ENCODE measurements at regions of chr16 and their contacts with region 1.

Region 1: GRCh38 chr16:30407102-30407803 is at the start of gene ZNF771:
- DNase-seq: peak; percentile 96
- H3K4me3 ChIP-seq: peak within 1 kb of the TSS; percentile 69 to 99
- H3K27ac ChIP-seq: peak within 1 kb of the TSS; percentile 73 to 74
- H3K4me1 ChIP-seq: peaks cover 8 to 15% of the 10 kb centered on the region in 2 experiments; a peak in 2 of 4 replicates
- H3K27me3 ChIP-seq: no peaks in the 10 kb centered on the region
- CTCF ChIP-seq: no peak
- EP300 ChIP-seq: no peak; a peak in 1 of 4 replicates
- RAD21 ChIP-seq: no peak
- polyA plus RNA-seq, gene ZNF771: 20.4 and 21.7 TPM in 2 replicates

Region 2: GRCh38 chr16:30355144-30355894 is 51.9 kb before region 1 on chr16 and contains the start of gene CD2BP2:
- CTCF ChIA-PET with region 1: interaction called, 23 read pairs
- POLR2A ChIA-PET with region 1: interaction called, 5 read pairs
- DNase-seq: peak; percentile 96
- H3K4me3 ChIP-seq: peak within 1 kb of the TSS; percentile 93 to 99
- H3K27ac ChIP-seq: peak within 1 kb of the TSS; percentile 95 to 99
- H3K4me1 ChIP-seq: peaks cover 34 to 39% of the 10 kb centered on the region in 2 experiments
- H3K27me3 ChIP-seq: no peaks in the 10 kb centered on the region
- CTCF ChIP-seq: no peak
- EP300 ChIP-seq: 0 out of 4 replicates have a peak, but pooled peaks of 1 of the 2 experiments have one; percentile 4
- RAD21 ChIP-seq: no peak; the same call in 1 of the 2 replicates
- polyA plus RNA-seq, gene CD2BP2: 80.8 and 85.3 TPM in 2 replicates

Region 3: GRCh38 chr16:30370444-30371247 is 36.6 kb before region 1 on chr16 and contains the start of gene TBC1D10B:
- CTCF ChIA-PET with region 1: interaction called, 7 read pairs
- POLR2A ChIA-PET with region 1: interaction called, 10 read pairs
- DNase-seq: peak; percentile 93
- H3K4me3 ChIP-seq: peak within 1 kb of the TSS; percentile 74 to 87
- H3K27ac ChIP-seq: peak within 1 kb of the TSS; percentile 57 to 91; a peak in 3 of 4 replicates
- H3K4me1 ChIP-seq: peaks cover 4 to 37% of the 10 kb centered on the region in 2 experiments; a peak in 3 of 4 replicates
- H3K27me3 ChIP-seq: no peaks in the 10 kb centered on the region
- CTCF ChIP-seq: peak; percentile 27; the same call in 1 of the 2 replicates
- EP300 ChIP-seq: no peak
- RAD21 ChIP-seq: 0 out of 2 replicates have a peak, but pooled peaks have one; percentile 22
- polyA plus RNA-seq, gene TBC1D10B: 15.7 and 20.5 TPM in 2 replicates

Region 4: DNA sequence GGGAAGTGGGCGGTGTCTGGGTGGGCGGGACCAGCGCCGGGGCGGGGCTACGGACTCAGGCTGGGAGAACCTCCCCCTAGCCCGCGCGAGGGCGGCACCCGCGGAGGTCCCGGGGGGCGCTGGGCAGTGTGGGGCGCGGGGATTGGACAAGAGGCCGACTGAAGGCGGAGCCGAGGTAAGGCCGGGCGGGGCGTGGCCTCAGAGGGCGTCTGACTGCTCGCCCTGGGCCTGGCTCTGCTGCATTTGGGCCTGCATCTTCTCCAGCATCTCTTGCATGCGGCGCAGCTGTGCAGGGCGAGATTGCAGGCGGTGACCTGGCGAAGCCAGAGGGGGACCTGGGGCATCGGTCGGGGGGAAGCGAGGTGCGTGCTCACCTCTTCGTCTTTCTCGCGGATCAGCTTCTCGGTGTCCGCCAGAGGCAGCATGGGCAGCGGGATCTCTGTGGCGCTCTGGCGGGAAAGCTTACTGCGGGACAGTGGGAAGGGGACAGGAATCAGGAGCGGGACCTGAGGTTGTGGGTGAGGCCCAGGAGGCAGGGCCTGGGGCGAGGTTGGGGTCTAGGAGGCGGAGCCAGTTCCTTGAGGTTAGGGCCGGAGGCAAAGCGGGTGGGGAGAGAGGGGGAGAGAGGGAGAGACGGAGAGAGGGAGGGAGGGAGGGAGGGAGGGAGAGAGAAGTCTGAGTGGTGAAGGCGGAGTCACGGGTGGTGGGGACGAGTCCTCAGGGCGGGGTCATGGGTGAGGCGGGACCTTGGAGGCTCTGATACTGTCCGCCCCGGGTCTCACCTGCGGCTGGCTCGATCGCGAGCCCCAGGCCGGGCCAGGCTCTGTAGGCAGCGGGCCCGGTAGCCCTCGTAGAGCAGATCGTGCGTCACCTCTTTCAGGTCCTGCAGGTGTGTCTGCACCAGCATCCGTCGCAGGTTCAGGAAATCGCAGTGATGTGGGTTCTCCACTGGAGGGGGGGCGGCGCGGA is 28.7 kb before region 1 on chr16:
- CTCF ChIA-PET with region 1: interaction called, 11 read pairs
- POLR2A ChIA-PET with region 1: no interaction called
- DNase-seq: peak; percentile 98
- H3K4me3 ChIP-seq: peak overlapping the region; percentile 70 to 96
- H3K27ac ChIP-seq: peak overlapping the region; percentile 98 to 99
- H3K4me1 ChIP-seq: peaks cover 6 to 9% of the 10 kb centered on the region in 2 experiments; a peak in 3 of 4 replicates
- H3K27me3 ChIP-seq: no peaks in the 10 kb centered on the region
- CTCF ChIP-seq: peak; percentile 35
- EP300 ChIP-seq: peak in 1 of 2 experiments; percentile 18; a peak in 1 of 4 replicates
- RAD21 ChIP-seq: no peak

Region 5: DNA sequence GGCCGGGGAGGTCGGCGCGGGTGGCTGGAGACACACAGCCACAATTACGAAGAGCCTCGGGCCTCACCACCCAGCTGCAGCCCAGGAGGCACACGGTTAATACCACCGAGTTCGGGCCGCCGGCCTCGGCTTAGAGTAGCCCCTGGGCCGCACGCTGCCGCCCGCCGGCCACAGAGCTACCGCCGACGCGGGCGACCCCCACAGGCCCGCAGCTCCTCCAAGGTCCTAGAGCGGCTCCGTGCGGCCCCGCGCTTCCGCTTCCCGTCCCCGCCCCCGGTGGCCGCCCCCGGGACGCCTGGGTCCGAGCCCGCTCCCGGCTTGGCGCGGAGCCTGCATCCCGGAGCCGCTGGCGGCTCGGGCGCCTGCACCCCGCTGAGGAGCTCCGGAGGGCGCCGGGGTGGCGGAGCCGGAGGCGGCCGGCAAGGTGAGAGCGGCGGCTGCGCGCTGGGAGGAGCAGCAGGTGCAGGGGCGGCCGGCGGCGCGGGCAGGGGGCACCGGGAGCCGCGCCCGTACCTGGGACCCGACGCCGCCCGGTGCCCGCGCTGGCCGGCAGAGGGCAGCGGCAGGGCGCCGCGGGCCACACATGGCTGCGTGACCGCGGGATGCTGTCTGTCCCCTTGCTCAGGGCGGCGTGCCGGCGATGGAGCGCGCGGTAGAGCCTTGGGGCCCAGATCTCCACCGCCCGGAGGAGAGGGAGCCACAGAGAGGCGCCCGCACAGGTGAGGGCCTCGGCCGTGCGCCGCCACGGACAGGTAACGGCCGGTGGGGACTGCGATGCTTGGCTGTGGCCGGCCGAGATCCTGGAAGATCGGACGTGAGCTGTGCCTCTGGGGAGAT is 11.9 kb before region 1 on chr16 and contains the start of gene ZNF48:
- CTCF ChIA-PET with region 1: interaction called, 38 read pairs
- POLR2A ChIA-PET with region 1: interaction called, 17 read pairs
- DNase-seq: peak; percentile 94
- H3K4me3 ChIP-seq: peak within 1 kb of the TSS; percentile 88 to 94
- H3K27ac ChIP-seq: peak within 1 kb of the TSS; percentile 83 to 96
- H3K4me1 ChIP-seq: peaks cover 10 to 18% of the 10 kb centered on the region in 2 experiments; a peak in 2 of 4 replicates
- H3K27me3 ChIP-seq: no peaks in the 10 kb centered on the region
- CTCF ChIP-seq: peak; percentile 22; the same call in 1 of the 2 replicates
- EP300 ChIP-seq: peak; percentile 36 to 45; a peak in 1 of 4 replicates
- RAD21 ChIP-seq: no peak; the same call in 1 of the 2 replicates
- polyA plus RNA-seq, gene ZNF48: 7.9 and 8.8 TPM in 2 replicates

Region 6: GRCh38 chr16:30417529-30418349 is 10.5 kb after region 1 on chr16:
- CTCF ChIA-PET with region 1: interaction called, 16 read pairs
- POLR2A ChIA-PET with region 1: interaction called, 9 read pairs
- DNase-seq: peak; percentile 93
- H3K4me3 ChIP-seq: peak overlapping the region; percentile 12 to 40; a peak in 3 of 4 replicates
- H3K27ac ChIP-seq: peak overlapping the region in 1 of 2 experiments; percentile 50; a peak in 2 of 4 replicates
- H3K4me1 ChIP-seq: peaks cover 0 to 13% of the 10 kb centered on the region in 2 experiments; a peak in 1 of 4 replicates
- H3K27me3 ChIP-seq: no peaks in the 10 kb centered on the region
- CTCF ChIP-seq: no peak
- EP300 ChIP-seq: no peak
- RAD21 ChIP-seq: no peak; the same call in 1 of the 2 replicates

Region 7: GRCh38 chr16:30429678-30430427 is 22.6 kb after region 1 on chr16 and contains the start of gene DCTPP1:
- CTCF ChIA-PET with region 1: interaction called, 13 read pairs
- POLR2A ChIA-PET with region 1: no interaction called
- DNase-seq: peak; percentile 94
- H3K4me3 ChIP-seq: peak within 1 kb of the TSS; percentile 69 to 82
- H3K27ac ChIP-seq: peak within 1 kb of the TSS; percentile 41 to 56; a peak in 3 of 4 replicates
- H3K4me1 ChIP-seq: peaks cover 6 to 10% of the 10 kb centered on the region in 2 experiments; a peak in 1 of 4 replicates
- H3K27me3 ChIP-seq: no peaks in the 10 kb centered on the region
- CTCF ChIP-seq: peak; percentile 85
- EP300 ChIP-seq: no peak
- RAD21 ChIP-seq: peak; percentile 74
- polyA plus RNA-seq, gene DCTPP1: 78.9 and 79.2 TPM in 2 replicates